ENCODE measurements at regions of chr7 and their contacts with region 1.

Region 1: DNA sequence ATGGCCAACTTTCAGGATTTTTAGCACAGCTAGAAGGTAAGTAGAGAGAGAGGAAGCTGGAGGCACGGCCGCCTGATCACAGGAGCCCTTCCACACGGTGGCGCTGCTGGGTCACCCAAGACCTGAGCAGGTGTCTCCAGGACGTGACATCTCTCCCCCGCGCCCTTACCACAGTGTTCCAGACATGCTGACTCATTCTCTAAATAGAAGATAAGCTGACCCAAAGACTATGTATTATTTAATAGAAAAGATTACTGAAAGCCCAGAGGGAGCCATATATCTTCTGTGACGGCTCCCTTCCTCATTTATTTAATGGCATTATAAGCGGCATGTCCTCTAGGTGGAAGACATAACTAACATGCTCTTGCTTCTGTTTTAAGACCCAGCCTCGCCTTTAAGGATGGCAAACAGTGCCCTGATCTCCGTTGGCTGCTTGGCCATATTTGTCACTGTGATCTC is 26.0 kb upstream of the MALSU1 start:
- DNase-seq: peak; percentile 84
- H3K4me3 Mint-ChIP-seq: peak overlapping the region; percentile 55
- H3K27ac Mint-ChIP-seq: peak overlapping the region; percentile 21
- H3K4me1 Mint-ChIP-seq: peaks cover 20% of the 10 kb centered on the region
- H3K27me3 Mint-ChIP-seq: peaks cover 3% of the 10 kb centered on the region

Region 2: DNA sequence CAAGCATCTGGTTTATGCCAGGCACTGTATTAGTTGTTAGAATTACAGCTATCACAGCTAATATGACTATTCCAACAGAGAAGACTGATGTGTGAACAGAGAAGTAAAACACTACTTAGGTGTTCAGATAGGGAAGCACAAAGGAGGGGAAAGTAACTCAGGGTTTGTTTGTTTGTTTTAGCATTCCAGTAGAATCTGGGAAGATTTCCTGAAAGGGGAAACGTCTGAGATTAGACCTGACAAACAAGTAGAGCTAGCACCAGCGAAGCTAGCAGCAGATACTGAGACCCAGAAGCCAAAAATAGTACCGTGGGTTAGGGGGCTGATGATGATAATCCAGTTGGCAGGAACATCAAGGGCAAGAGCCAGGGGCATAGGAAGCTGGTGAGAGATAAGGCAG is 196.4 kb before region 1 on chr7:
- intact Hi-C with region 1: no loop called
- DNase-seq: no peak
- H3K4me3 Mint-ChIP-seq: no peak overlapping the region
- H3K27ac Mint-ChIP-seq: no peak overlapping the region
- H3K4me1 Mint-ChIP-seq: no peaks in the 10 kb centered on the region
- H3K27me3 Mint-ChIP-seq: peaks cover 29% of the 10 kb centered on the region

Region 3: DNA sequence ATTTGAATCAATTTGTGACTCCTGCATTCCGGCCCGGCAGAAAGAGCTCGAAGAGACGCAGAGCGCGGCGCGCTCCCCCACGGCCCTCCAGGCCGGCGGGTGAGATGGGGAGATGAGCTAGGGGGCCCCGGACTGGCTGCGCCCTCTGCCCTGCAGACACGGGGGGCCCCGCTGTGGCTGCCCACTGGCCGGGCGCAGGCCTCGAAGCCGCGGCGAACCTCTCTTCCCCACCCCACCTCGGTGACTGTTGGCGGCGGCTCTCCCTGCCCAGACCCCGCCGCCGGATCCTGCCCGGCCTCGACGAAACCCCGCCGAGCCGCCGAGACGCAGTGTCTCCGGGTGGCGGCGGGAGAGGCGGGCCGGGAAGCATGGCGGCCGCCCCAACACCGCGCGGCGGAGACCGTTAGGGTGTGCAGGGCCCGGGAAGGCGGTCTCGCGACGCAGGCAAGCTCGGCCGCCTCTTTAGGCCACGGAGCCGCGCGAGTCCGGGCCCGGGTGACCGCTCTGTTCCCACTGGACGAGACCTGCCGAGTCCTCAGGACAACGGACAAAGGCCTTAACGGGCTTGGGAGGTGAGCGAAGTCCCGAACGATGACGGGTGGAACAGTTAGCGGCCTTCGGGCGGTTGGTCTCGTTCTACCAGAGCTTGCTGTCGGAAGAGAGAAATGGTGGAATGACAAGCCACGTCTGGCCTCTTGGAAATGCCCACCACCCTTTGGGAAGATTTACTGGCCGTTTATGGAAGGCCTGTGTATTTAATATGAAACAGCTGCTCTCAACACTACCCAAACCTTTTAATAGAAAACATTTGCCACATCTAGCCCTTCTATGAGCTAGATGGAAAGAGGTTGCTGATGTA is 67.0 kb before region 1 on chr7:
- intact Hi-C with region 1: no loop called
- DNase-seq: no peak
- H3K4me3 Mint-ChIP-seq: peak overlapping the region; percentile 45
- H3K27ac Mint-ChIP-seq: no peak overlapping the region
- H3K4me1 Mint-ChIP-seq: peaks cover 4% of the 10 kb centered on the region
- H3K27me3 Mint-ChIP-seq: peaks cover 28% of the 10 kb centered on the region

Region 4: GRCh38 chr7:23298885-23299769 is 26.0 kb after region 1 on chr7 and contains the start of gene MALSU1:
- intact Hi-C with region 1: loop called (anchors 2 kb)
- DNase-seq: peak; percentile 93
- H3K4me3 Mint-ChIP-seq: peak within 1 kb of the TSS; percentile 86
- H3K27ac Mint-ChIP-seq: peak within 1 kb of the TSS; percentile 92
- H3K4me1 Mint-ChIP-seq: peaks cover 32% of the 10 kb centered on the region
- H3K27me3 Mint-ChIP-seq: no peaks in the 10 kb centered on the region
- total RNA-seq, gene MALSU1: 83.6 and 89.0 TPM in 2 replicates

Region 5: GRCh38 chr7:23347682-23348180 is 74.6 kb after region 1 on chr7:
- intact Hi-C with region 1: loop called (anchors 2 kb)
- DNase-seq: no peak
- H3K4me3 Mint-ChIP-seq: peak overlapping the region; percentile 53
- H3K27ac Mint-ChIP-seq: peak overlapping the region; percentile 64
- H3K4me1 Mint-ChIP-seq: peaks cover 50% of the 10 kb centered on the region
- H3K27me3 Mint-ChIP-seq: no peaks in the 10 kb centered on the region

Region 6: GRCh38 chr7:23462846-23463245 is 189.7 kb after region 1 on chr7:
- intact Hi-C with region 1: loop called (anchors 1 kb)
- DNase-seq: no peak
- H3K4me3 Mint-ChIP-seq: no peak overlapping the region
- H3K27ac Mint-ChIP-seq: no peak overlapping the region
- H3K4me1 Mint-ChIP-seq: peaks cover 49% of the 10 kb centered on the region
- H3K27me3 Mint-ChIP-seq: peaks cover 24% of the 10 kb centered on the region

Region 7: DNA sequence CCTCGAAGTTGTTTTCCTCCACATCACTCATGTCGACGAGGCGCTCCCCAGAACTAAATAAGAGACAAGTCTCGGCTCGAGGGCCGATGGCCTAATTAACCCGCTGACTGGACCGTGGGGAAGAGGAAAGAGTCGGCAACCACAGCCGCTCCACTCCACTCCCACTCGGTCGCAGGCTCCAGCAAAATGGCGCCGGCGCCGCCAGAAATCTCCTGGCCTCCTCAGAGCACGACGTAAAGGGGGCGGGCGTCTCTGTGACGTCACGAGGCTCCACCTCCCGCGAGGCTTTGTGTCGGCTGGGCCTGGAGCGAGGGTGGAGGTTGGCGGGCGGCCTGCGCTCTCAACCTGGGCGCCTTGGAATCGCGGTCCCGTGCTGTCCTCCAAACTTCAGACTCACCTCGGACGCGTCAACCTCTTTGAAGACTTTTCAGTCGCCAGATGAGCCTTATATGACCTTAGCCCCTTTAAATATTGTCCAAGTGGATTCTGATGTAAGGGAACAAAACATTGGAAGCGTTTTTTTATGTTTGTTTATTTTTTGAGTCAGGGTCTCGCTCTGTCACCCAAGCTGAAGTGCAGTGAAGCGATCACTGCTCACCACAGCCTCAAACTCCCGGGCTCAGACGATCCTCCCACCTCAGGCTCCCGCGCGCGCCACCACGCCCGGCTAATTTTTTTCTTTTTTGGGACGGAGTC is 258.8 kb after region 1 on chr7 and contains the start of gene TRA2A:
- intact Hi-C with region 1: loop called (anchors 5 kb)
- DNase-seq: peak; percentile 94
- H3K4me3 Mint-ChIP-seq: peak within 1 kb of the TSS; percentile 97
- H3K27ac Mint-ChIP-seq: peak within 1 kb of the TSS; percentile 99
- H3K4me1 Mint-ChIP-seq: peaks cover 39% of the 10 kb centered on the region
- H3K27me3 Mint-ChIP-seq: no peaks in the 10 kb centered on the region
- total RNA-seq, gene TRA2A: 105 and 115 TPM in 2 replicates

Region 8: GRCh38 chr7:23546897-23547572 is 273.9 kb after region 1 on chr7:
- intact Hi-C with region 1: loop called (anchors 1 kb)
- DNase-seq: peak; percentile 72
- H3K4me3 Mint-ChIP-seq: no peak overlapping the region
- H3K27ac Mint-ChIP-seq: no peak overlapping the region
- H3K4me1 Mint-ChIP-seq: peaks cover 7% of the 10 kb centered on the region
- H3K27me3 Mint-ChIP-seq: peaks cover 7% of the 10 kb centered on the region